ENCODE measurements at regions of chr2 and their contacts with region 1.

Region 1: GRCh38 chr2:215269397-215270119 is 42.3 kb upstream of the ATIC start:
- DNase-seq: peak; percentile 18 to 64
- ATAC-seq: peak in 1 of 8 donors; percentile 61
- H3K4me3 ChIP-seq: no peak overlapping the region
- H3K27ac ChIP-seq: no peak overlapping the region
- H3K4me1 ChIP-seq: no peaks in the 10 kb centered on the region
- H3K27me3 ChIP-seq: no peaks in the 10 kb centered on the region
- CTCF ChIP-seq: peak; percentile 57 to 88 (median 82)

Region 2: DNA sequence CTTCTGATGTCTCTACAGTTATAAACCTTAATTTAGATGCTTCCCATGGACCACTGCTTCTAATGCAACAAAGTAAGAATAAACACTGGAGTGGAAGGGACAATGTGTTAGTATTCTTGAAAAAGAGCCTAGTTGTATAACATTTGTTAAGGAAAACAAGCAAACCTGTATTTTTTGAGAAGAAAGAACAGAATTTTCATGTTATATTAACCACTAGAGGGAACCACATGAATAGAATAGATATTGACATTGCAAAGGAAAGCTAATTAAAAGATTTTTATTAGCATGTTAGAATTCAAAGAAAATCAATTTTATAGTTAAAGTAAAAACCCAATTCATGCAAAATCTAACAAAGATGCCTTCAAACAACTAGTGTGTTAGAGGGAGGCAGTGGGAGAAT is 308.9 kb before region 1 on chr2:
- intact Hi-C with region 1: loop called in 2 of 10 experiments (anchors 10 kb)
- DNase-seq: no peak
- ATAC-seq: no peak
- H3K4me3 ChIP-seq: no peak overlapping the region
- H3K27ac ChIP-seq: no peak overlapping the region
- H3K4me1 ChIP-seq: no peaks in the 10 kb centered on the region
- H3K27me3 ChIP-seq: no peaks in the 10 kb centered on the region
- CTCF ChIP-seq: peak in 5 of 9 donors; percentile 13 to 49 (median 25)

Region 3: DNA sequence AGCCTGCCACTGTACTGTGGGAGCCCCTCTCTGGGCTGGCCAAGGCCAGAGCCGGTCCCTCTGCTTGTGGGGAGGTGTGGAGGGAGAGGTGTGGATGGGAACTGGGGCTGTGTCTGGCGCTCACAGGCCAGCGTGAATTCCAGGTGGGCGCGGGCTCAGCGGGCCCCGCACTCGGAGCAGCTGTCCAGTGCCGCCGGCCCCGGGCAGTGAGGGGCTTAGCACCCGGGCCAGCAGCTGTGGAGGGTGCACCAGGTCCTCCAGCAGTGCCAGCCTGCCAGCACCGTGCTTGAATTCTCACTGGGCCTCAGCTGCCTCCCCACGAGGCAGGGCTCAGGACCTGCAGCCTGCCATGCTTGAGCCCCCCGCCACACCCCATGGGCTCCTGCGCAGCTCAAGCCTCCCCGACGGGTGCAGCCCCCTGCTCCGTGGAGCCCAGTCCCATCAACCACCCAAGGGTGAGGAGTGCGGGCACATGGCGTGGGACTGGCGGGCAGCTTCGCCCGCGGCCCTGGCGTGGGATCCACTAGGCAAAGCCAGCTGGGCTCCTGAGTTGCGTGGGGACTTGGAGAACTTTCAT is 61.7 kb before region 1 on chr2:
- intact Hi-C with region 1: no loop called
- DNase-seq: no peak
- ATAC-seq: no peak
- H3K4me3 ChIP-seq: no peak overlapping the region
- H3K27ac ChIP-seq: no peak overlapping the region
- H3K4me1 ChIP-seq: no peaks in the 10 kb centered on the region
- H3K27me3 ChIP-seq: no peaks in the 10 kb centered on the region
- CTCF ChIP-seq: no peak

Region 4: DNA sequence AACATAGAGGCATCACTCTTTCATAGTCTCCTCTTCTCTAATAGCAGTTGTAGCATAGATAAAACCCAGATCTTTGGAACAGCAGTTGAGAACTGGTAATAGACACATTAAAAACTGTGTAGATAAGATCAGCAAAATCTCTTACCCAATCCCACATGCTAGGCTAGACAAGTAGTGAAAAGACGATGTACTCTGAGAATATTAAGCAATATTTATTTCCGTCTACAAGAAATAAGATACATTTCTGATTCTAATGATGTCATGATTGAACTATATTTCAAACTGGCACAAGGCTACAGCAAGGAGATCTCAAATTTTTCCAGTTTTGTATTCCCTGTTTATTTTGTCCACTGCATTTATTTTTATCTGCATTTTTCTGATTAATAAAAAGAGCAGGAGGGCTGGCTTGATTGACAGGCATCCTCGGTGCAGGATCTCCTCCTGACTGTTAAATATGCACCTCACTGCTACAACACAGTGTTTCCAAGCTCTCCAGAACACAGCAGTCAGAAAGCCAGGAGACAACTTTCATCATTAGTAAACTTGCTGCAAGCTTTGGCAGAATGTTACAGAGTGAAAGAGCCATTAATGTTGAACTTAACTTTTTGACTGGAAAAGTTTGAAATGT is 31.0 kb before region 1 on chr2:
- intact Hi-C with region 1: no loop called
- DNase-seq: no peak
- ATAC-seq: no peak
- H3K4me3 ChIP-seq: no peak overlapping the region
- H3K27ac ChIP-seq: no peak overlapping the region
- H3K4me1 ChIP-seq: no peaks in the 10 kb centered on the region
- H3K27me3 ChIP-seq: no peaks in the 10 kb centered on the region
- CTCF ChIP-seq: no peak

Measured in heart right ventricle (tissue), 16 donors.